ENCODE measurements at regions of chr19 and their contacts with region 1.

Region 1: DNA sequence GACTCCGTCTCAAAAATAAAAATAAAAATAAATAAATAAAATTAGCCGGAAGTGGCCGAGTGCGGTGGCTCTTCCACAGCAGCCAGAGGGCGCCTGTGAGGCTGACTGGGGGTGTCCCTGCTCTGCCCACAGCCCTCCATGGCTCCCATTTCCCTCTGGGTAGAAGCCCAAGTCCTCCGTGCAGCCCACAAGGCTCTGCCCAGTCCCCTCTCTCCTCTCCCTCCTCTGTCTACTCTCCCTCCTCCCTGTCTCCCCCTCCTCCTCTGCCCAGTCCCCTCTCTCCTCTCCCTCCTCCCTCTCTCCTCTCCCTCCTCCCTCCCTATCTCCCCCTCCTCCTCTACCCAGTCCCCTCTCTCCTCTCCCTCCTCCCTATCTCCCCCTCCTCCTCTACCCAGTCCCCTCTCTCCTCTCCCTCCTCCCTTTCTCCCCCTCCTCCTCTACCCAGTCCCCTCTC is 20.4 kb downstream of the MISP start:
- DNase-seq: peak; percentile 49
- H3K4me3 ChIP-seq: no peak overlapping the region
- H3K27ac ChIP-seq: no peak overlapping the region
- H3K4me1 ChIP-seq: no peaks in the 10 kb centered on the region
- H3K27me3 ChIP-seq: no peaks in the 10 kb centered on the region
- CTCF ChIP-seq: peak; percentile 52 to 71
- POLR2A ChIP-seq: no peak

Region 2: GRCh38 chr19:782185-782877 is 11.0 kb after region 1 on chr19:
- CTCF ChIA-PET with region 1: interaction called, 4 read pairs
- POLR2A ChIA-PET with region 1: no interaction called
- dilution Hi-C with region 1: no loop called
- intact Hi-C with region 1: loop called (anchors 1 kb)
- DNase-seq: peak; percentile 66
- H3K4me3 ChIP-seq: peak overlapping the region in 2 of 3 experiments; percentile 7 to 20
- H3K27ac ChIP-seq: peak overlapping the region; percentile 94
- H3K4me1 ChIP-seq: peaks cover 32% of the 10 kb centered on the region
- H3K27me3 ChIP-seq: no peaks in the 10 kb centered on the region
- CTCF ChIP-seq: no peak
- POLR2A ChIP-seq: no peak

Region 3: DNA sequence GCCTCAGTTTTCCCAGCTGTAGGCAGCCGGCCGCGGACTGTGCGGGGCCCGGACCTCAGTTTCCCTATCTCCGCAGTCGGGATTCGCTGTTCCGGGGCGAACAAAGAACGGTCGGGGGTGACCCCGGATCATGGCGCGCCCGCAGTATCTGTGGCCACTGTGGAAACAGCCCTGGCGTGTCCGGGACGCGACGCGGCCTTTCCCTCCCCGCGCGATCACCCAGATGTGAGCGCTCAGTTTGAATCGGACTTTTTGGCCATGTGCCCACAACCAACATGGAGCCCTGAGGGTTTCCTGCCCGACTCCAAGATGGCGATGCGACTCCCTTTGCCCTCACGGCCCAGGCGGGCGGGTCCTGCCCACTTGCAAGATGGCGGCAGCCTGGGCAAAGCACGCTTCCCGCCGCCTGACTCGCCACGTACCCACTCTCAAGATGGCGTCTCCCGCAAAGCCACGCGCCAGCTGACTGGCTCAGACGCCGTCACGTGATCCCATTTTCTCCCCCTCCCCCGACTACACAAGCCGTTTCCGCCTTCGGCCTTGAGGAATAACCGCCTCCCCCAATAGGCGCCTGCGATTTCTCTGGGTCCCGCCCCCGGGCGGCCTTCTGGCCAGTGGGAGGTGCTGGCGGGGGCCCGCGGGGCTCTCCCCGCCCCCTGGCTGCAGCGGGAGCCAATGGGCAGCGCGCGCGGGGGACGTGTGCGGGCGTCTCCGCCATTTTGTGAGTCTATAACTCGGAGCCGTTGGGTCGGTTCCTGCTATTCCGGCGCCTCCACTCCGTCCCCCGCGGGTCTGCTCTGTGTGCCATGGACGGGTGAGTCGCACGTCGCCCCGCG is 25.6 kb after region 1 on chr19 and contains the start of gene PTBP1:
- CTCF ChIA-PET with region 1: interaction called, 32 read pairs
- POLR2A ChIA-PET with region 1: no interaction called
- dilution Hi-C with region 1: no loop called
- intact Hi-C with region 1: loop called (anchors 1 kb)
- DNase-seq: peak; percentile 100
- H3K4me3 ChIP-seq: peak within 1 kb of the TSS; percentile 84 to 93 (median 87)
- H3K27ac ChIP-seq: peak within 1 kb of the TSS; percentile 73
- H3K4me1 ChIP-seq: peaks cover 33% of the 10 kb centered on the region
- H3K27me3 ChIP-seq: no peaks in the 10 kb centered on the region
- CTCF ChIP-seq: no peak
- POLR2A ChIP-seq: peak; percentile 88
- total RNA-seq, gene PTBP1: 607 and 623 TPM in 2 replicates

Region 4: DNA sequence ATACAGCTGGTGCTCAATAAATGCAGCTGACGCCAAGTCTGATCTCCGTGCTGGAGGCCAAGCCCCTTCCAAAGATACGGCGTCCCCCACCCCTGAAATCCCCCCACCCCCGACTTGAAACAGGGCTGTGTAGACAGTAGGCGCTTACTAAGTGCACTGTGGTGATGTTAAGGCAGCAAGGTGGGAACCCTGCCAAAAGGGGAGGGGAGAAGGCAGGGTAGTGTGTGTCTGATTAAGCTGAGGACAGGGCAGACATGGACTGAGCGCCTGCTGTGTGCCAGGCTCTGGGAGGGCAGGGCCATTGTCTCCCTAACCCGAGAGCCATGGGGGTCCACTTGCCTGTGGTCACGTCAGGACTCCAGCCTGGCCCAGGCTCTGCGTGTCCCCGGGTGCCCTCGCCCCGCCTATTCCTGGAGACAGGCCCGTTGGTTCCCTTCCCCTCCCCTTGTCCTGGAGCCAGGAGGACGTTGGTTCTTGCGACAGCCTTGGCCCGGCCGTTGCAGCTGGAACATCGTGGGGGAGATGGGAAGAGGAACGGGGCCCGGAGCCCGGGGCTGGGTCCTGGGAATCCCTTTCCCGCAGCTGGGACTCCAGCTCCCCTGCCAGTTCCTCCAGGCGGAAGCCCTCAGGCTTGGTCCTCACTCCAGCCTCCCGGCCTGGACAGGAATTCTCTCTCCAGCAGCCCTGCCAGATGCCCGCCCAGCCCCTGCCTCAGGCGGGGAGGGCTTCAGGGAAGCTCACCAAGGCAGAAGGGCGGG is 79.0 kb after region 1 on chr19:
- CTCF ChIA-PET with region 1: interaction called, 10 read pairs
- POLR2A ChIA-PET with region 1: no interaction called
- dilution Hi-C with region 1: no loop called
- intact Hi-C with region 1: no loop called
- DNase-seq: no peak
- H3K4me3 ChIP-seq: no peak overlapping the region
- H3K27ac ChIP-seq: no peak overlapping the region
- H3K4me1 ChIP-seq: no peaks in the 10 kb centered on the region
- H3K27me3 ChIP-seq: no peaks in the 10 kb centered on the region
- CTCF ChIP-seq: no peak
- POLR2A ChIP-seq: no peak

Region 5: DNA sequence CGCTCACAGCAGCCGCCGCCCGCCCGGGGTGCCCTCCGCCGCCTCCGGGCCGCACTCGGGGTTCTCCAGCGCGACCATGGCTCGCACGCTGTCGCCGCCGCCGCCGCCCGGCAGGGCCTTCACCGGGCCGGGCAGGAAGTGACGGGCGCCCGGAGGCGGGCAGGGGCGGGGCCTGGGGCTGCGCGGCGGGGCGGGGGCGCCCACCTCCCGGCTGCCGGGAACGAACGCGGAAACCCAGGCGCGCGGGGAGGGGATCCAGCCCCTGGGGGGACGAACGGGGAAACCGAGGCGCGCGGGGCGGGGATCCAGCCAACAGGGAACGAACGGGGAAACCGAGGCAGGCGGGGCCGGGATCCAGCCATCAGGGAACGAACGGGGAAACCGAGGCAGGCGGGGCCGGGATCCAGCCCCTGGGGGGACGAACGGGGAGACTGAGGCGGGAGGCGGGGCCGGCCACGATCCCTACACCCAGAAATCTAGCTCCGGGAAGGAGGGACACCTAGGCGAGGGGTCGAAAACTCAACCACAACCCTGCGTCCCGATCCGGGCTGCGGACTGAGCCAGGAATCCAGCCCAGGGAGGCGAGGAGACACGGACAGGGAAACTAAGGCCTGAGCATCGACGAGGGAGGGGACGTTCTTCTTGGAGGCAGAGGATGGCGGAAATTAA is 141.9 kb after region 1 on chr19 and contains the start of gene R3HDM4:
- CTCF ChIA-PET with region 1: no interaction called
- POLR2A ChIA-PET with region 1: interaction called, 11 read pairs
- dilution Hi-C with region 1: no loop called
- intact Hi-C with region 1: loop called (anchors 2 kb)
- DNase-seq: peak; percentile 38
- H3K4me3 ChIP-seq: peak within 1 kb of the TSS; percentile 59 to 98 (median 91)
- H3K27ac ChIP-seq: peak within 1 kb of the TSS; percentile 40
- H3K4me1 ChIP-seq: peaks cover 10% of the 10 kb centered on the region
- H3K27me3 ChIP-seq: peaks cover 9 to 13% of the 10 kb centered on the region in 2 experiments
- CTCF ChIP-seq: no peak
- POLR2A ChIP-seq: peak; percentile 47
- total RNA-seq, gene R3HDM4: 49.6 and 53.9 TPM in 2 replicates

Region 6: GRCh38 chr19:984165-984967 is 213.0 kb after region 1 on chr19 and contains the start of gene WDR18:
- CTCF ChIA-PET with region 1: interaction called, 6 read pairs
- POLR2A ChIA-PET with region 1: no interaction called
- dilution Hi-C with region 1: no loop called
- intact Hi-C with region 1: loop called (anchors 2 kb)
- DNase-seq: peak; percentile 85
- H3K4me3 ChIP-seq: peak within 1 kb of the TSS; percentile 79 to 95 (median 83)
- H3K27ac ChIP-seq: peak within 1 kb of the TSS; percentile 79
- H3K4me1 ChIP-seq: peaks cover 11% of the 10 kb centered on the region
- H3K27me3 ChIP-seq: no peaks in the 10 kb centered on the region
- CTCF ChIP-seq: peak in 1 of 2 donors; percentile 19
- POLR2A ChIP-seq: peak; percentile 67
- total RNA-seq, gene WDR18: 54.8 and 74.7 TPM in 2 replicates

Measured in endothelial cell of umbilical vein (primary cell).